ENCODE measurements at regions of chr13 and their contacts with region 1.

Region 1: DNA sequence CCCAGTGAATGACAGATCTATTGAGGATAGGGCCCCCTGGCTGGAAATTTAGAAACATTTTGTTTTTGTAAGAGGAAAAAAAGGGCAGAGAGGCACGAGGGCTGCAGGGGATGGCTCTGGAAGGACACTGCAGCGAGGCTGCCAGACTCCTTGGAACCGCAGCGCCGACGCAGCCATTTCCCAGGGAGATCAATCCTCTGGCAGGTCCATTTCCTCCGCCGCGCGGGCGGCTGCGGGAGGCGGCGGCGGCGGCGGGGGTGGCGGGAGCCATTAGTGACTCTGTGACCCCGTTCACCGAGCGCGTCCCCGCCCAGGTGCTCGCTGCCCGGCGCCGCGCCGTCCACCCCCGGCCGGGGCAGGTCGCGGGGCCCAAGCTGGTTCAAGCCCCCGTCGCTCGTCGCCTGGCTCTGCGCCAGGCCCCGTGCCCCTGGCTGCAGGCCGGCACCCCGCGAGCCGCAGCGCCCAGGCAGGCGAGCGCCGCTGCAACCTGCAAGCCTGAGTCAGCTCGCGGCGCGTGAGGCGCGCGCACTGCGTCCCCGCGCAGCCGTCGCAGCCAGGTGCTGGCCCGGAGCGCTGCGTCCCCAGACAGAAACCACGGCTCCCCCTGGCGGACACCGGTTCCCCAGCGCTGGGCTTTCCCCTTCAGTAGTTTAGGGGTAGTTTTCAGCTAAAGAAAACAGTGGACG is 192.6 kb downstream of the KATNAL1 start:
- DNase-seq: peak; percentile 24
- H3K4me3 ChIP-seq: peak overlapping the region; percentile 59 to 84 (median 72)
- H3K27ac ChIP-seq: peak overlapping the region; percentile 57 to 83 (median 79)
- H3K4me1 ChIP-seq: peaks cover 0 to 46% (median 22%) of the 10 kb centered on the region in 3 donors
- H3K27me3 ChIP-seq: peaks cover 0 to 9% (median 0%) of the 10 kb centered on the region in 4 donors
- CTCF ChIP-seq: peak; percentile 89 to 97 (median 94)
- POLR2A ChIP-seq: peak in 2 of 4 donors; percentile 50 to 65

Region 2: GRCh38 chr13:29508130-29508875 is 606.4 kb before region 1 on chr13:
- intact Hi-C with region 1: loop called (anchors 10 kb)
- DNase-seq: no peak
- H3K4me3 ChIP-seq: no peak overlapping the region
- H3K27ac ChIP-seq: no peak overlapping the region
- H3K4me1 ChIP-seq: peaks cover 0 to 61% (median 15%) of the 10 kb centered on the region in 3 donors
- H3K27me3 ChIP-seq: peaks cover 0 to 43% (median 2%) of the 10 kb centered on the region in 4 donors
- CTCF ChIP-seq: peak; percentile 90 to 99 (median 94)
- POLR2A ChIP-seq: no peak

Region 3: GRCh38 chr13:29771247-29771646 is 343.5 kb before region 1 on chr13:
- intact Hi-C with region 1: loop called (anchors 5 kb)
- DNase-seq: no peak
- H3K4me3 ChIP-seq: no peak overlapping the region
- H3K27ac ChIP-seq: no peak overlapping the region
- H3K4me1 ChIP-seq: no peaks in the 10 kb centered on the region
- H3K27me3 ChIP-seq: no peaks in the 10 kb centered on the region
- CTCF ChIP-seq: peak; percentile 28 to 62 (median 39)
- POLR2A ChIP-seq: no peak

Region 4: GRCh38 chr13:29849731-29850223 is 264.9 kb before region 1 on chr13:
- intact Hi-C with region 1: loop called (anchors 5 kb)
- DNase-seq: no peak
- H3K4me3 ChIP-seq: peak overlapping the region; percentile 80 to 96 (median 88)
- H3K27ac ChIP-seq: peak overlapping the region; percentile 99 to 100 (median 99)
- H3K4me1 ChIP-seq: peaks cover 0 to 36% (median 0%) of the 10 kb centered on the region in 3 donors
- H3K27me3 ChIP-seq: no peaks in the 10 kb centered on the region
- CTCF ChIP-seq: peak in 1 of 6 experiments; percentile 2
- POLR2A ChIP-seq: no peak

Region 5: DNA sequence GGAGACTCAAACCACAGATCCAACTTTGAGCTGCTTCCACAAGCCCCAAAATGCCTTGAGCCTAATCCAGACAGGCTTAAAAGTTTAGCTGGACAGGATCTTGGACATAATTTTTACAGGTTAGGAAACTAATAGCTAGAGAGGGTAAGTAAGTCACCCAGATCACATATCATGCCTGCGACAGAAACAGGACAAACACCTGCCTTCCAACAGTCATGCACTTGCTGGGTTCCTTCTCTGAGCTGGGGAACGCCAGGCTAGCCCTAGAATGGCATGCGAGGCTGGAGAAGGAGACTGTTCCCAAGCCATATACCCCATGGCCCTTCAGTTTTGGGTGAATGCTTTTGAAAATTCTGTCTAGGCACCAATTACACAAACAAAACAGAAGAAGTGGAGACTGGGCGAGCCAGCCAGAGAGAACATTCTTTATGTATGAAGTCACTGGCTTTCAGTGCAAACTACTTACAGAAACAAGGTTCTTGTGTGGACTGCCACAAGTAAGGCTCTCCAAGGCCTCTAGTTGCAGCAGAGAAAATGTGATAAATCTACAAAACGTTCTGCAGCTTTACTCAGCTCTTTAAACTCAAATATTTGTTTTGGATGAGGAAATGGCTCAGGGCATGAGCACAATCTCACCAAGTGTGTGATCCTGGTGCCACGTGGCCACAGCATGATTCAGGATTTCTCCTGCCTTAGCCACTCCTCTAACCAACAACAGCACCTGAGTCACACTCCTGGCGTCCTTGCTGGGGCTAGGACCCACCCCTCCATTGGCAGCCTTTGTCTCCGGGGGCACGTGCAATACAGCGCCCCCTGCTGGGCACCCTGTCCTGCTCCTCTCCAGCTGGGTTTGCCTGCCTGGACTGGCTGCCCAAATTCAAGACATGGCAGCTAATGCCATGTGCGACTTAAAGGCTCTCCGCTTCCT is 190.9 kb before region 1 on chr13:
- intact Hi-C with region 1: loop called (anchors 10 kb)
- DNase-seq: no peak
- H3K4me3 ChIP-seq: peak overlapping the region in 1 of 4 donors; percentile 24
- H3K27ac ChIP-seq: peak overlapping the region; percentile 83 to 93 (median 88)
- H3K4me1 ChIP-seq: peaks cover 41 to 81% (median 45%) of the 10 kb centered on the region in 3 donors
- H3K27me3 ChIP-seq: no peaks in the 10 kb centered on the region
- CTCF ChIP-seq: peak; percentile 57 to 96 (median 91)
- POLR2A ChIP-seq: no peak

Region 6: DNA sequence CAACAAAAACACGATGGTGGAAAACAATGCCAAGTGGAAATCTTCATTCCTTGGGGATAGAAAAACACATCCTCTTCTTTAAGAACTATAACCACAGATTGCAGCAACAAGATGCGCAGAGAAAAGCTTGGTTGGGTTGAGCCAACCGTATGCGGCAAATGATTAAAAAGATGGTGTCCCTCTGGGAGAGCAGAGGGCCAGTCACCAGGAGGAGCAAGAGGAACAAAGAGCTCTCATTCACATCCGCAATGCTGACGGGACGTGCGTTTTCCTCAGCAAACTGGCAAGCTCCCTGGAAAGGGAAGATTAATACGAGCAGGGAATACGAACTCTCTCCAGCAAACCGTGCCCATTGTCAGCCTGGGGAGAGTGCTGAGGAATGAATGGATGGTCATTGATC is 51.1 kb after region 1 on chr13:
- intact Hi-C with region 1: no loop called
- DNase-seq: no peak
- H3K4me3 ChIP-seq: no peak overlapping the region
- H3K27ac ChIP-seq: no peak overlapping the region
- H3K4me1 ChIP-seq: no peaks in the 10 kb centered on the region
- H3K27me3 ChIP-seq: no peaks in the 10 kb centered on the region
- CTCF ChIP-seq: no peak
- POLR2A ChIP-seq: no peak

Measured in esophagus squamous epithelium (tissue), 5 donors.